A673 (cell line): ENCODE measurements at regions of chrX and their contacts with region 1.

Region 1: GRCh38 chrX:147174596-147174995 is 360.1 kb upstream of the CXorf51A start:
- DNase-seq: no peak
- H3K4me3 ChIP-seq: no peak overlapping the region
- H3K27ac ChIP-seq: no peak overlapping the region
- H3K4me1 ChIP-seq: no peaks in the 10 kb centered on the region
- H3K27me3 ChIP-seq: no peaks in the 10 kb centered on the region
- CTCF ChIP-seq: no peak

Region 2: GRCh38 chrX:146934256-146934655 is 240.3 kb before region 1 on chrX:
- CTCF ChIA-PET with region 1: no interaction called
- POLR2A ChIA-PET with region 1: no interaction called
- intact Hi-C with region 1: no loop called
- DNase-seq: no peak
- H3K4me3 ChIP-seq: no peak overlapping the region
- H3K27ac ChIP-seq: no peak overlapping the region
- H3K4me1 ChIP-seq: no peaks in the 10 kb centered on the region
- H3K27me3 ChIP-seq: no peaks in the 10 kb centered on the region
- CTCF ChIP-seq: no peak

Region 3: GRCh38 chrX:148893395-148893794 is 1718.8 kb after region 1 on chrX:
- CTCF ChIA-PET with region 1: interaction called, 11 read pairs
- POLR2A ChIA-PET with region 1: no interaction called
- intact Hi-C with region 1: no loop called
- DNase-seq: no peak
- H3K4me3 ChIP-seq: no peak overlapping the region
- H3K27ac ChIP-seq: no peak overlapping the region
- H3K4me1 ChIP-seq: no peaks in the 10 kb centered on the region
- H3K27me3 ChIP-seq: no peaks in the 10 kb centered on the region
- CTCF ChIP-seq: no peak